CD8-positive, alpha-beta memory T cell (primary cell): ENCODE measurements at regions of chrX and their contacts with region 1.

Region 1: DNA sequence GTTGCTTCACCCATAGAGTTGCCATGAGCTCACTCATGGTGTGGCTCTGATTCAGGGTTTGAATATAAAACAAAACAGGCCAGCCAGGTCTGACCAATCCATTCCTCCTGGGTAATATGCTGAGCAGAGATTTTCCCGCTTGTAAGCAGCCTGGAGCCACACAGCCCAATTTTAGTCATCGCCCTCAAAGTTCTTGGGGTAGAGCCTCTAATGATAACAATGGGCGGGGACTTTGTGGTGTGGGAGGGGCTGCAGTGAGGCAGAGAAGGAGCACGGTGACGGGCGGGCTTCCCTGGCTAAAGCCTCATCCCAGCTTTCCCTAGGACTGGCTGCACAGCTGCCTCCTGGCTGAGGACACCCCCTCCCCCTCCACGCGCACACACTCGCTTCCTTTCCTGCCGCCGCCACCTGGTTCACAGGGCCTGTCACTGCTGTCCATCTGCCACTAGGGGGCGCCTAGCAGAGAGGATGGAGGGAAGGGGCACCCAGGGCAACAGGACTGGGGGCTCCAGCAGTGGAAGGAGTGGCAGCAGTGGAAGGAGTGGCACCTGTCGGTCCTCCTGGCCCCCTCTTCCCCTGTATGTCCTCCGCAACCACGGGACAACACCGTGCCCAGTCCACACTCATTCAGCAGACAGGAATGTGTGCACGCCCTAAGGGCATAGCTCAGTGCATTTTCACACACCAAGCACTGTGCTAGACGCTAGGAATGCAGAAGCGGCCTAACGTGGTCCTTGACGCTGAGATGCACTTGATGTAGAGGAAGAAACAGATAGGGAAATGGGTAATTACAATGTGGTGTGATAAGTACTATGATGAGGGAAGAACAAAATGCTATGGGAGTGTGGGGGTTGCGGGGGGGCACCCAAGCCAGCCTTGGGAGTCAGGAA is 26.8 kb downstream of the PRPS1 start:
- DNase-seq: peak; percentile 49 to 77 (median 57)
- H3K4me3 ChIP-seq: no peak overlapping the region
- H3K4me3 Mint-ChIP-seq: no peak overlapping the region
- H3K27ac ChIP-seq: no peak overlapping the region
- H3K27ac Mint-ChIP-seq: peak overlapping the region in 3 of 8 donors; percentile 19 to 69 (median 43)
- H3K4me1 ChIP-seq: peaks cover 5% of the 10 kb centered on the region
- H3K4me1 Mint-ChIP-seq: peaks cover 0 to 17% (median 17%) of the 10 kb centered on the region in 3 donors
- H3K27me3 ChIP-seq: no peaks in the 10 kb centered on the region
- H3K27me3 Mint-ChIP-seq: peaks cover 0 to 7% of the 10 kb centered on the region in 2 donors

Region 2: GRCh38 chrX:107290019-107290418 is 365.1 kb before region 1 on chrX:
- CTCF ChIA-PET with region 1: no interaction called
- POLR2A ChIA-PET with region 1: no interaction called
- DNase-seq: no peak
- H3K4me3 ChIP-seq: no peak overlapping the region
- H3K4me3 Mint-ChIP-seq: no peak overlapping the region
- H3K27ac ChIP-seq: no peak overlapping the region
- H3K27ac Mint-ChIP-seq: no peak overlapping the region
- H3K4me1 ChIP-seq: no peaks in the 10 kb centered on the region
- H3K4me1 Mint-ChIP-seq: no peaks in the 10 kb centered on the region
- H3K27me3 ChIP-seq: no peaks in the 10 kb centered on the region
- H3K27me3 Mint-ChIP-seq: peaks cover 3 to 14% of the 10 kb centered on the region in 2 donors

Region 3: DNA sequence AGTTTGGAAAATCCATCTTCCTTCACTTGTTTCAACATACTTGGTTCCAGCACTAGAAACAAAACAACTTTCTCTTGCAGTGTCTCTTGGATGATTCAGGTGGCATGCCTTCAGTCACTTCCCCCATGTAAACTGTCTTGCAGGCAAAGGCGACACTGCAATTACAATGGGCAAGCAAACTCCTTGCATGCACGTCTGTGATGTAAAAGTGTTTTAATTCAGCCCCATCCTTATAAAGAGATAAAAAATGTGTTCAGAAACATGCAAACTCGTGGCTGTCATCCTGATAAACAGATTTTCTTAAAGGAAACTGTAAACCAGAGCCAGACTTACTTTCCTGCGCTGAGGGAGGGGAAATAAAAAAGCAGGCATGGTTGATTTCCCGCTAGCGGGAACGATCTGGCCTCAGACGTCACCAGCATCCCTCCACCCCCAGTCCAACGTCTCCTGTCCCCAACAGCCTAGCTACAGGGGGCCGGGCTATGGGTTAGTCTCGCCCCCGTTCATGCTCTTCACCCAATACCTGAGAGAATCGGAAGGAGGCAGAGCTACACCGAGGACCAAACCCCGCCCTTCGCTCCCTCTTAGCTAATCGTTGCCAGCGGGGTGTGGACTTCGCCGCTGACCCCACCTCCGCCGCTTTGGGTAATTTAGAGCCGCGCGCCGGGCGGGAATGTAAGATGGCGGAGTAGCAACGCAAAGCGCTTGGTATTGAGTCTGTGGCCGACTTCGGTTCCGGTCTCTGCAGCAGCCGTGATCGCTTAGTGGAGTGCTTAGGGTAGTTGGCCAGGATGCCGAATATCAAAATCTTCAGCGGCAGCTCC is 27.1 kb before region 1 on chrX and contains the start of gene PRPS1:
- CTCF ChIA-PET with region 1: interaction called, 11 read pairs
- POLR2A ChIA-PET with region 1: interaction called, 3 read pairs
- DNase-seq: peak; percentile 80 to 92 (median 87)
- H3K4me3 ChIP-seq: peak within 1 kb of the TSS; percentile 86
- H3K4me3 Mint-ChIP-seq: peak within 1 kb of the TSS; percentile 88 to 97 (median 93)
- H3K27ac ChIP-seq: peak within 1 kb of the TSS; percentile 83
- H3K27ac Mint-ChIP-seq: peak within 1 kb of the TSS; percentile 90 to 96 (median 93)
- H3K4me1 ChIP-seq: peaks cover 9% of the 10 kb centered on the region
- H3K4me1 Mint-ChIP-seq: peaks cover 27 to 40% (median 35%) of the 10 kb centered on the region in 3 donors
- H3K27me3 ChIP-seq: no peaks in the 10 kb centered on the region
- H3K27me3 Mint-ChIP-seq: peaks cover 0 to 4% of the 10 kb centered on the region in 2 donors
- total RNA-seq, gene PRPS1: 110 to 113 TPM

Region 4: GRCh38 chrX:107672955-107673378 is 17.9 kb after region 1 on chrX:
- CTCF ChIA-PET with region 1: interaction called, 13 read pairs
- POLR2A ChIA-PET with region 1: interaction called, 3 read pairs
- DNase-seq: peak; percentile 61 to 91 (median 90)
- H3K4me3 ChIP-seq: peak overlapping the region; percentile 66
- H3K4me3 Mint-ChIP-seq: peak overlapping the region; percentile 81 to 87 (median 84)
- H3K27ac ChIP-seq: peak overlapping the region; percentile 99
- H3K27ac Mint-ChIP-seq: peak overlapping the region; percentile 99 to 100 (median 100)
- H3K4me1 ChIP-seq: peaks cover 45% of the 10 kb centered on the region
- H3K4me1 Mint-ChIP-seq: peaks cover 48 to 63% (median 59%) of the 10 kb centered on the region in 3 donors
- H3K27me3 ChIP-seq: no peaks in the 10 kb centered on the region
- H3K27me3 Mint-ChIP-seq: peaks cover 0 to 14% of the 10 kb centered on the region in 2 donors

Region 5: GRCh38 chrX:107716816-107717700 is 61.9 kb after region 1 on chrX:
- CTCF ChIA-PET with region 1: interaction called, 51 read pairs
- POLR2A ChIA-PET with region 1: interaction called, 6 read pairs
- DNase-seq: peak; percentile 78 to 96 (median 93)
- H3K4me3 ChIP-seq: peak overlapping the region; percentile 77
- H3K4me3 Mint-ChIP-seq: peak overlapping the region; percentile 92 to 100 (median 94)
- H3K27ac ChIP-seq: peak overlapping the region; percentile 99
- H3K27ac Mint-ChIP-seq: peak overlapping the region; percentile 96 to 100 (median 98)
- H3K4me1 ChIP-seq: peaks cover 44% of the 10 kb centered on the region
- H3K4me1 Mint-ChIP-seq: peaks cover 48 to 56% (median 54%) of the 10 kb centered on the region in 3 donors
- H3K27me3 ChIP-seq: no peaks in the 10 kb centered on the region
- H3K27me3 Mint-ChIP-seq: peaks cover 0 to 44% of the 10 kb centered on the region in 2 donors